ENCODE measurements at regions of chr5 and their contacts with region 1.

Region 1: DNA sequence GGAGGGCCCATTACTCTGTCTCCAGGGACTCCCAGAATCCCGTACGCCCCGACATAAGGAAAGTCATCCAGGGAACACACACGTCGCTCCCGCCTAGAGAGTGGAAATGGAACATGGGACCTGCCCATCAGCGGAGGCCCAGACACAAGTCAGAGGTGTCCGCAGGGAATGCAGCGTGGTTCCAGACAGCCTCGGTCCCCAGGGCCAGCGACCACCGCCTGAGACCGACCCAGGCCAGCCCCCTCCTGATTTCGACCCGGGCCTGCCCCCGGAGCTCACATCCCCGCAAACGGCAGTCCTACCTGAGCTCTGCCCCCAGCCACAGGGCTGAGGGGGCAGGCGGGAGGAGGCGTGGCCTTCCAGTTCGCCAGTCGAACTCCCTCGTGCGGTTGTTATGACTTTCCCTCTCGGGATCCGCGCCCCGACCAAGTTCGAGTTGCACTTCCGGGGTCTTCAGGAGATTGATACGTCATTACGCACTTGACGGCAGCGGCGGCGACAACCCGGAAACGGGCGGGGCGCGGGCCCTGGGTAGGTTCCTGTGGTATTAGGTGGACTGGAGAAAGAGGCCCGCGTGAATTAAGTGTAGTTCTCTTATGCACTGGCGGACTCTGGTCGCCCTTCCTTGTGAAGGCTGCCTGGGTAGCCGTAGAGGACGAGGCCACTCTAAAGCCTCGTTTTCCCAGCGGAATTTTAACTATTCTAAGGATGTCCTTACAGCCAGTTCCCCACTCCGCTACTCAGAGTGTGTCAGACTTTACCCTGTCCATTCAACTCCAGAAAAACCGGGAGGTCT is 370.0 kb upstream of the POU5F2 start:
- DNase-seq: peak; percentile 86
- ATAC-seq: peak; percentile 95
- H3K4me3 Mint-ChIP-seq: peak overlapping the region; percentile 93
- H3K27ac Mint-ChIP-seq: peak overlapping the region; percentile 86
- H3K4me1 Mint-ChIP-seq: peaks cover 25% of the 10 kb centered on the region
- H3K27me3 Mint-ChIP-seq: peaks cover 11% of the 10 kb centered on the region
- CTCF ChIP-seq: no peak

Region 2: GRCh38 chr5:94288937-94289336 is 177.5 kb after region 1 on chr5:
- CTCF ChIA-PET with region 1: no interaction called
- POLR2A ChIA-PET with region 1: no interaction called
- intact Hi-C with region 1: no loop called
- DNase-seq: no peak
- ATAC-seq: no peak
- H3K4me3 Mint-ChIP-seq: no peak overlapping the region
- H3K27ac Mint-ChIP-seq: no peak overlapping the region
- H3K4me1 Mint-ChIP-seq: no peaks in the 10 kb centered on the region
- H3K27me3 Mint-ChIP-seq: no peaks in the 10 kb centered on the region
- CTCF ChIP-seq: no peak

Region 3: GRCh38 chr5:94618493-94619328 is 507.3 kb after region 1 on chr5 and contains the starts of genes KIAA0825 and SLF1:
- CTCF ChIA-PET with region 1: no interaction called
- POLR2A ChIA-PET with region 1: no interaction called
- intact Hi-C with region 1: loop called (anchors 1 kb)
- DNase-seq: peak; percentile 70
- ATAC-seq: peak; percentile 94
- H3K4me3 Mint-ChIP-seq: peak within 1 kb of the TSS; percentile 96
- H3K27ac Mint-ChIP-seq: peak within 1 kb of the TSS; percentile 82
- H3K4me1 Mint-ChIP-seq: peaks cover 22% of the 10 kb centered on the region
- H3K27me3 Mint-ChIP-seq: no peaks in the 10 kb centered on the region
- CTCF ChIP-seq: no peak
- total RNA-seq, gene KIAA0825: 1.4 and 2.3 TPM in 2 replicates
- total RNA-seq, gene SLF1: 7.3 and 12.0 TPM in 2 replicates

Region 4: DNA sequence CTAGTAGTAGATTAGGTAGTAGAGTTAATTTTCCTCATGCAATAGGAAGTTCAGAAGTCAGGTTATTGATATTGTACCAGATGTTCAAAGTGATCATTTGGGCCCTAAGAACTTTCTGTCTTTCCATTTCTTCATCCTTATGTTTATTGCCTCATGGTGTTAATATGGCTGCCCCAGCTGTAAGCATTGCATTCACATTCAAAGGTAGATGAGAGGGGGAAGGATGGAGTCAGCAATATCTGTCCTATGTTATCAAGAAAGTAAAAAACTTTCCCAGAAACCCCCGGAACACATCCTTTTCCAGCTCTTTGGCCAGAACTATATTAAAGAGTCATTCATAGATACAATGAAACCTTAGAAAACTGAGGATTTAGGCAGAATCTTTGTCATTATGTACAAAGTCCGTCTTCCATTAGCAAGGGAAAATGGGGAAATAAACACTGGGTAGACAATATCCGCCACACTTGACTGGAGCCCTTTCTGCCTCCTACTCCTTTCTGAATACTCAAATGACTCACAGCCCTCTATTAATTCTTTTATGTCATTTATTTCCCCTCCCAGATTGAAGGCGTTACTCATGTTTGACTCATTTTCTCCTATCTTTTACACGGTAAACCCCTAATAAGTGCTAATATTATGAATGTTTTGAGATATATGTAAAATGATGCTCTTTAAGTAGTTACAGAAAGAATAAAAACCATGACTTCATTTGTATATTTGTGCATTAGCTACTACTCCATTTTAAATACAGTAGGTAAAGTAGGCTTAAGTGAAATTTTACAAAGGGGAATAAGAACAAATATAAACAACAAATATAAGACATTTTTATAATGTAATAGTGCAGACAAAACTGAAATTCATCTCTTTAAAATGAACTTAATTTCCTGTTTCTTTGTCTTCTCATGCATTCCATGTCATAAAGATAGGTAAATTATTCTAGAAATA is 634.7 kb after region 1 on chr5:
- CTCF ChIA-PET with region 1: no interaction called
- POLR2A ChIA-PET with region 1: no interaction called
- intact Hi-C with region 1: loop called (anchors 2 kb)
- DNase-seq: no peak
- ATAC-seq: peak; percentile 72
- H3K4me3 Mint-ChIP-seq: peak overlapping the region; percentile 57
- H3K27ac Mint-ChIP-seq: peak overlapping the region; percentile 83
- H3K4me1 Mint-ChIP-seq: peaks cover 42% of the 10 kb centered on the region
- H3K27me3 Mint-ChIP-seq: no peaks in the 10 kb centered on the region
- CTCF ChIP-seq: no peak

Region 5: GRCh38 chr5:94793113-94793815 is 681.9 kb after region 1 on chr5:
- CTCF ChIA-PET with region 1: no interaction called
- POLR2A ChIA-PET with region 1: no interaction called
- intact Hi-C with region 1: loop called (anchors 2 kb)
- DNase-seq: no peak
- ATAC-seq: peak; percentile 96
- H3K4me3 Mint-ChIP-seq: peak overlapping the region; percentile 24
- H3K27ac Mint-ChIP-seq: peak overlapping the region; percentile 54
- H3K4me1 Mint-ChIP-seq: peaks cover 24% of the 10 kb centered on the region
- H3K27me3 Mint-ChIP-seq: no peaks in the 10 kb centered on the region
- CTCF ChIP-seq: no peak

Region 6: DNA sequence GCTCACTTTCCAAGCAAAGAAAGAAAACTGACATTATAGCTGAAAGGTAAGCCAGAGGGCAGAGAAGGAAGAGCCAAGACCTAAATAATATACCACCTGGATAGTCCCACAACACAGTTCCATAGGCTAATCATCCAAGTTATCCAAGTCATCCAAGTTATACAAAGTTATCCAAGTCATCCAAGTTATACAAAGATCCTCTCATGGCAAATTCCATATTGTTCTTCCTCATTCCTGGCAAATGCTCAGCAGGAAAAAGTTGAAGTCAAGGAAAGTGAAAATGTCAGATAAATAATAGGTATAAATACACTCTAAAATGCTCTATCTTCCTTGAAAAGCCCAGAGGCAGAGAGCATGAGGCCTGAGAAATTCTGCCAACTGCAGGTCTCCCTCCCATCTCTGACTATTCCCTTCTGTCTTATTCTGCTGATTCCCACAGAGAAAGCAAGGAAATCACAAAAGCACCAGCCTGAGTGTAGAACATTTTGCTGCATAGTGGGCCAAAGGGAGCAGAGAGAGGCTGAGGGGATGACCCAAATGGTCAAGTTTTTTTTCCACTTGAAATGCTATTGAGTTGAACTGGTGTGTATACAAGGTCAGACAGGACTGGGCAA is 1161.0 kb after region 1 on chr5:
- CTCF ChIA-PET with region 1: no interaction called
- POLR2A ChIA-PET with region 1: no interaction called
- intact Hi-C with region 1: no loop called
- DNase-seq: no peak
- ATAC-seq: no peak
- H3K4me3 Mint-ChIP-seq: no peak overlapping the region
- H3K27ac Mint-ChIP-seq: no peak overlapping the region
- H3K4me1 Mint-ChIP-seq: no peaks in the 10 kb centered on the region
- H3K27me3 Mint-ChIP-seq: peaks cover 10% of the 10 kb centered on the region
- CTCF ChIP-seq: no peak

Measured in activated B cell treated with CpG ODN at 0.5 μM for 24 hours (primary cell).